ENCODE measurements at regions of chr12 and their contacts with region 1.

Region 1: GRCh38 chr12:93569656-93570551 is 2.6 kb upstream of the SOCS2 start:
- DNase-seq: peak; percentile 92
- H3K4me3 Mint-ChIP-seq: peak overlapping the region; percentile 80
- H3K27ac Mint-ChIP-seq: peak overlapping the region; percentile 86
- H3K4me1 Mint-ChIP-seq: peaks cover 30% of the 10 kb centered on the region
- H3K27me3 Mint-ChIP-seq: peaks cover 14% of the 10 kb centered on the region

Region 2: DNA sequence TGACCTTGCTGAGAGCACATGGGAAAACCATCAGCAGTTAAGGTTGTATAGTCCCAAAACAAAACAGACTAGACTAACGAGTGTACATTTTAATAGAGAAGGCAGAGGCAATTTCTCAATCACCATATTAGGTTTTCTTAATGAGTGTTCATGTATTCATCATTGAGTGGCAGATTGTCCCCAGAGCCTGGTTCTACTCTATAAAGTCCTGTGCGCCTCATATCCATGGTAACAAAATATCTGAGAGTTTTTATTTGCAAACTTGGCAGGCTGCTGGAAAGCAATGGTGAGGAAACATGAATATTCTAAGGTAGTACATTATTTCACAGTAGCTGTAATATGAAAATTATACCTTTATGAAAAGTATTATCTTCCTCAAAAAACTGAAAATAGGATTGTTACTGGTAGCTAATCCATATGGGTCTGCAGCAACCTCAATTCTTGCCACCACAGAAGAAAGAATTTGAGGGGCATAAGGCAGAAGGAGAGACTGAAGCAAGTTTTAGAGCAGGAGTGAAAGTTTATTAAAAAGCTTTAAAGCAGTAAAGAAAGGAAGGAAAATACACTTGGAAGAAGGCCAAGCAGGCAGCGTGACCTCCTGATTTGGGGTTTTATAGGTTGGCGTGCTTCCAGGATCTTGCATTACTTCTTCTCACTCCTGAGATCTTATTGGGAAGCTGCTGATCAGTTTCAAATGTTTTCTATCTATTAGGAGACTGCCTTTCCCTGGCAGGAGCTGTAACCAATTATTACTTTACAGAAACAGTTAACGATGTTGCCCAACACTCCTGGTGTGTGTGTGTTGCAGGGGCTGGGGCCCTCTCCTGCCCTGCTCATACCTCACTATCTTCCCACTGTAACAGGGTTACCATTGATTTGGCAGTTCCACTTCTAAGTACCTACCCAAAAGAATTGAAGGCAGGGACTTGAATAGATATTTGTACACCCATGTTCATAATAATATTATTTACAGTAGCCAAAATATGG is 346.2 kb before region 1 on chr12:
- intact Hi-C with region 1: no loop called
- DNase-seq: no peak
- H3K4me3 Mint-ChIP-seq: no peak overlapping the region
- H3K27ac Mint-ChIP-seq: no peak overlapping the region
- H3K4me1 Mint-ChIP-seq: peaks cover 3% of the 10 kb centered on the region
- H3K27me3 Mint-ChIP-seq: peaks cover 4% of the 10 kb centered on the region

Region 3: GRCh38 chr12:93441617-93442410 is 128.1 kb before region 1 on chr12 and contains the start of gene UBE2N:
- intact Hi-C with region 1: loop called (anchors 1 kb)
- DNase-seq: peak; percentile 99
- H3K4me3 Mint-ChIP-seq: peak within 1 kb of the TSS; percentile 94
- H3K27ac Mint-ChIP-seq: peak within 1 kb of the TSS; percentile 97
- H3K4me1 Mint-ChIP-seq: peaks cover 43% of the 10 kb centered on the region
- H3K27me3 Mint-ChIP-seq: no peaks in the 10 kb centered on the region
- total RNA-seq, gene UBE2N: 225 and 243 TPM in 2 replicates

Region 4: DNA sequence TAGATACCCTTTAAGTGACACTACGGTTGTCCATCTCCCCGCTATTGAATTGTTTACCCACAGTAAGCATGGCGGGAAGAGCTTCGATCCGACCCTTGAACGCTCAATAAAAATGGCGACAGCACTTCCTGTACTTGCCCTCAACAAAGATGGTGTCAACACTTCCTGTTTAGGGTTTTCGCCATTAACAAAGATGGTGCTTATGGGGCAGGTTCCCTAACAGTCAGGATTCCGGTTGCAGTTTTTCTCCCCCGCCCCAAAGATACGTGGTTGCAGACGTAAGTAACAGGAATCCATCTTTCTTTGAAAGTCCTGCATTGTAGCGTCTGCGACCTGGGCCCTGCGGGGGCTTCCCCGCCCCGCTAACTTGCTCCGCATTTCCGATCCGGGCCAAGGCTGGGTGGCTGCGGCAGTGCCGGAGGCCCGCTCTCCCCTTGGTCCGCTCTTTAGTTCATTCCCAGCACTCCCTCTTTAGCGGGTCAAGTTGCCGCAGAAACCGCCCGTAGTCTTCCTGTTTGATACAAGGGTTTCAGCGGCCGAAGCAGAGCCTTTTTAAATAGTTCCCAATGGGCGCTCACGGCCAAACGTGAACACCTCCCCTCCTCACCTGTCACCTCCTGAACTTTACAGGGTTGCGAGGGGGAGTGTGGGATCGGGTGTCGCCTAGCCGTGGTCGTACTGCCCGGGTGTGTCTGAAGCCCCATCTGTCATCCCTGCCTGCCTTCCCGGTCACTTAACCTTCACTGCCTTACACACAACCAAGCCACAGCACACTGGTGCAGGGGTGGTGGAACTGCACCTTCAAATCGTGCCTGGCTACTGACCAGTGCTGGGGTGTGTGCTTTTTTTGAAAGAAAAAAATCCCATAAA is 107.5 kb after region 1 on chr12 and contains the start of gene CRADD:
- intact Hi-C with region 1: loop called (anchors 1 kb)
- DNase-seq: peak; percentile 96
- H3K4me3 Mint-ChIP-seq: peak within 1 kb of the TSS; percentile 96
- H3K27ac Mint-ChIP-seq: peak within 1 kb of the TSS; percentile 99
- H3K4me1 Mint-ChIP-seq: peaks cover 37% of the 10 kb centered on the region
- H3K27me3 Mint-ChIP-seq: peaks cover 4% of the 10 kb centered on the region
- total RNA-seq, gene CRADD: 8.1 and 12.6 TPM in 2 replicates

Region 5: DNA sequence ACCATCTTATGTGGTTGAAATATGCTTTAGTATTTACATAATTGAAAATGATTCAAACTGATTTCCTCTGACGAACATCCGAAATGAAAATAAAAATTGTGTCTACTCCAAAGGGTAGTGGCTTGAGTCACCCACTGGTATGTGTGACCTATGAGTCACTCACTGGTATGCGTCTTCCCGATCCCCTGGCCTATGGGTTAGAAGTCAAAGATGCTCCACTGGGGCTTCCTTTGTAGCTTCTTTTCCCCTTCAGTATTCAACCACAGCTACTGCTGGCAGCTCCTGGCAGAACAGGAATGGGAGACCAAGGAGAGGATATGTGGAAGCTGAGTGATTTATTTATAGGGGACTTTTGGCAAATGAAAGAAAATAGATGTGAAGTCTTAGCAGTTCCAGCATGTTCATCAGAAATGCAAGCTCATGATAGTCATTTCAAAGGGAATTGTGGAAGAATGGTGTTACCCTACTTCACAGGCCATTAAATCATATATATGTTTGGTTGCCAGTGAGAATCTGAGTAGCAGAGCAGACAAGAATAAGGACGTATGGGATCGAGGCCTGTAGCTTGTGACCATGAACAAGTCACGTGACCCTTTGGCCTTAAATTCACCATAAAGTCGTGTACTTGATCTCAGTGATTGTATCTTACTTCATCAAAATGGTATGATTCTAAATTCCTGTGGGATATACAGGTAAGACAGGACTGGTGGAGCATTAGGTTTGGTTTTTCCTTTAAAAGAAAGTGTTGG is 215.5 kb after region 1 on chr12:
- intact Hi-C with region 1: loop called (anchors 5 kb)
- DNase-seq: peak; percentile 84
- H3K4me3 Mint-ChIP-seq: peak overlapping the region; percentile 39
- H3K27ac Mint-ChIP-seq: peak overlapping the region; percentile 88
- H3K4me1 Mint-ChIP-seq: peaks cover 53% of the 10 kb centered on the region
- H3K27me3 Mint-ChIP-seq: no peaks in the 10 kb centered on the region

Region 6: GRCh38 chr12:93857279-93857938 is 287.5 kb after region 1 on chr12:
- intact Hi-C with region 1: no loop called
- DNase-seq: peak; percentile 46
- H3K4me3 Mint-ChIP-seq: no peak overlapping the region
- H3K27ac Mint-ChIP-seq: no peak overlapping the region
- H3K4me1 Mint-ChIP-seq: peaks cover 25% of the 10 kb centered on the region
- H3K27me3 Mint-ChIP-seq: no peaks in the 10 kb centered on the region

Region 7: DNA sequence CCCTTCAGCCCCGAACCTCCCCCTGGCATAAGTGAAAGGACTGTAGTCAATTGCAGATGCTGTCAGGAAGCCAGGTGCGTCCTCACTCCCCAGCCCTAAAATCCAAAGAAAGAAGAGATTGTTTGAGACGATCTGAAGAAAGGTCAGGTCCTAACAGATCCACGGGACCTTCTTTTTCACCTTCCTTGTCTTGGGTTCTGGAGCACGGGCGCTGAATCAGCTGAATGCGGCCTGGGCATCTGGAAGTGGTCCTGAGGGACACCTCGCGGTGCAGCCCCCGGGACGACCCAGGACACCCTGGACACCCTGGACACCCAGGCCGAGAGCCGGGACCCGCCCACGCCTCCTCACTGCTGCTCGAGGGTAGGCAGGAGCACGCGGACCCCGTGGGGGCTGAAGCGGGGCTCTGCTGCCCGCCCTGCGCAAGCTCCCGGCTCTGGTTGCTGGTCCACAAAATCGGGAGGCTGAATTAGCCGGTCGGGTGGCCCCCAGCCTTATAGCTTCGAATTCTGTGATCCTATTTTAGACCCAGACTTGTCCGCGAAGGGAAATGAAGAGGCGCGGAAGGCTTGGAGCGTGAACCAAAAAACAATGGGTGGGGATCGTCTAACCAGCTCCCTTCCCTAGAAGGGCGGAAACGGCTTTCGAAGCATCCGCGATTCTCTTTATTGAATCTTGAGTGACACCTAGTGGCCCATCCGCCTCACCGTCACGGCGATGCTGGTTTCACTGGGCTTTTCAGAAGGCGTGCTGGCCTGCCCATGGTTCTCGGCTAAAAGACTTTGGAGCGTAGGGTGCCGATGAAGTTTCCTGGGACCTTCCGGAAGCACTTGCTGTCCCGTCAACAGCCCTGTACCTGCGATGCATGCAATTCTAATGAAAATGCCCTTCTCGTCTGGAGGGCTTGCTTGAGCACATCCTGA is 532.1 kb after region 1 on chr12:
- intact Hi-C with region 1: loop called (anchors 1 kb)
- DNase-seq: peak; percentile 96
- H3K4me3 Mint-ChIP-seq: peak overlapping the region; percentile 88
- H3K27ac Mint-ChIP-seq: peak overlapping the region; percentile 84
- H3K4me1 Mint-ChIP-seq: peaks cover 37% of the 10 kb centered on the region
- H3K27me3 Mint-ChIP-seq: peaks cover 12% of the 10 kb centered on the region

Measured in activated CD4-positive, alpha-beta T cell treated with anti-CD3 and anti-CD28 coated beads, Interleukin-2, amount 10 ng/mL, durations not matched to agents 24 days and 14 days (primary cell).